Astrocyte of the cerebellum (primary cell): ENCODE measurements at regions of chr6 and their contacts with region 1.

Region 1: DNA sequence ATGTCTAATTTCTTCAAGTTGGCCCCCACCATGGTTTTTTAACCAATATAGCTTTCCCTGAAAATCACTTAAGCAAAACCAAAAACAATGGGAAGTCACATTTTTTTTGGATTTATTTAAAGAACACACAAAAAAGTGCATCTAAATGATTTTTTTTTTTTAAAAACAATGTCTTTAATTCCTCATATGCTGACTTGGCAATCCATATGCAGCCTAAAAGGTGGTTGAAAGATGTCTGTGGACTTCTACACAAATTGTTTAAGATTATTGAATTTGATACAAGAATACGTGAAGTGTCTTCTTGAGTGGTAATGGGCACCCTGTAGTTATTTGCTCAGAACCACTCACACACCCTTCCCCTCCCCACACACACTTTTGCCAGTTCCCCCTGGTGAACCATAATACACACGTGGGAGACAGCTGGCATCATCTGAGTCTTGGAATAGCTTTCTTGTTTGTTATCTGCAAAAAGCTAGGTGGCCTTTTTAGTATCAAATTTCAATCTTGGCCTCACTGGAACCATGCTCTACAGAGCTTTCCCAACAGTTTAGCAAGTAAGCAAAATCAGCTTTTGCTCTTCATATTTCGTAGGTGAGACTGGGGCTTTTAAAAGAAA is 60.9 kb upstream of the TULP1 start:
- DNase-seq: no peak
- H3K4me3 ChIP-seq: no peak overlapping the region
- CTCF ChIP-seq: no peak

Region 2: GRCh38 chr6:35532126-35532525 is 41.5 kb before region 1 on chr6:
- in situ Hi-C with region 1: no loop called
- DNase-seq: no peak
- H3K4me3 ChIP-seq: no peak overlapping the region
- CTCF ChIP-seq: no peak

Region 3: DNA sequence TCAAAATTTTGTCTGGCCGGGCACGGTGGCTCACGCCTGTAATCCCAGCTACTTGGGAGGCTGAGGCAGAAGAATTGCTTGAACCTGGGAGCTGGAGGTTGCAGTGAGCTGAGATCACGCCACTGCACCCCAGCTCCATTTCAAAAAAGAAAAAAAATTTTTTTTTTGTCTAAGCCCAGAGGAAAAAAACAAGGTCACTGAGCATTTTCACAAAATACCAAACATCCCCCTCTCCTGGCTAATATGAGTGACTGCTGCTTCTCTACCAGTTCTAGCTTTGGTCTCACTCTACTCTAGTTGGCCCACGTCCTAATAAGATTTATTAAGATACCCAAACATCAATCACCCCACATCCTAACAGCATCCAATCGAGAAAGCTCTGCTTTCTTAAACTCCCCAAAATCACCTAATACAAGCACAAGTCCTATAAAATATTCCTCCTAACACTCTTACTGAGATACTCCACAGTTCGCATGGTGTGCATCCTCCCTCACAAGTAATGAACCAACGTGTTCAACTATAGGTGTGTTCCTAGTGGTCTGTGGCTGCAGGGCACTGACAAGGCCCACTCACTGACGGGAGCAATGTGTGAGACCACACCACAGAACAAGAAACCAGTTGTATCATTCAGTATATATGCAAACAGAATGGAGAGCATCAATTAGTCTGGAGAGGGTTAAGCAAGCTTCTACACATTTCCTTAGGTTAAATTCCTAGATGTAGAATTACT is 50.9 kb after region 1 on chr6:
- in situ Hi-C with region 1: loop called (anchors 10 kb)
- DNase-seq: peak; percentile 15
- H3K4me3 ChIP-seq: no peak overlapping the region
- CTCF ChIP-seq: peak; percentile 48

Region 4: DNA sequence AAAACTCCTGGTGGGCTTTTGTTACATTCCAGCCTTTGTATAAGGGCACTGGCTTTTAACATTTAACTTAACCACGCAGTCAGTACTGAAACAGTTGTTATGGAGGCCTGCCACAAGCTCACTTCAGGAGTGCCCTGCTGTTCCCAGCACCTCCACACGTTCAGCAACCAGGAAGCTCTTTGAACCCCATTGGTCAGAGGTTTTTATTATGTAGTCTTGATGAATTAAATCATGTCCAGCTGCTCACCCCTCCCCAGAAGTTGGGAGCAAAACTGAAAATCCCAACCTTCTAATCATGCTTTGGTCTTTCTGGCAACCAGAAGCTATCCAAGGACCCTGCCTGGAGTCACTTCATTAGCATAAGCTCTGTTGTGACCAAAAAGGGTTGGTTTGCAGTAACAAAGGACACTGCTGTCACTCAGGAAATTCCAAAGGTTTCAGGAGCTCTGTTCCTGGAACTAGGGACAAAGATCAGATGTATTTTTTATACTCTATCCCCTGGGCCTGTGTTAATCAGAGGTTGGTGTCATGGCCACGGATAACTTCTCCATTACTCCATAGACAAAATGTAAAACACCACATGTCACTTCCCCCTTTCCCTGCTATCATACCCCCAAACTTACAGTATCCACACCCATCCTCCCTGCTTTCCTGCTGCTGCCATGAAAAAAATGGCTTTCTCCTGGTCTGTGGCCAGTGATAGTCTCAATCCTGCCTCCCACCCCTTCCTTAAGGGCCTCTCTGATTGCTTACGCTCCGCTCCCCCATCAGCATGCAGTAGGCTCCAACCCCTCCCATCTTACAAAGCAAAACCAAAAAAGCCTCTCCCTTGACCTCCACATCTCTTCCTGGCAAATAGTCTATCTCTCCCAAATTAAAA is 166.3 kb after region 1 on chr6:
- in situ Hi-C with region 1: loop called (anchors 5 kb)
- DNase-seq: no peak
- H3K4me3 ChIP-seq: no peak overlapping the region
- CTCF ChIP-seq: no peak